Sigmoid colon (tissue), 7 donors: ENCODE measurements at regions of chr4 and their contacts with region 1.

Region 1: GRCh38 chr4:76515975-76516843 is 81.2 kb downstream of the SHROOM3 start:
- DNase-seq: no peak
- H3K4me3 ChIP-seq: no peak overlapping the region
- H3K27ac ChIP-seq: no peak overlapping the region
- H3K4me1 ChIP-seq: peaks cover 0 to 3% (median 0%) of the 10 kb centered on the region in 4 donors
- H3K27me3 ChIP-seq: no peaks in the 10 kb centered on the region
- CTCF ChIP-seq: no peak
- EP300 ChIP-seq: no peak
- POLR2A ChIP-seq: no peak

Region 2: DNA sequence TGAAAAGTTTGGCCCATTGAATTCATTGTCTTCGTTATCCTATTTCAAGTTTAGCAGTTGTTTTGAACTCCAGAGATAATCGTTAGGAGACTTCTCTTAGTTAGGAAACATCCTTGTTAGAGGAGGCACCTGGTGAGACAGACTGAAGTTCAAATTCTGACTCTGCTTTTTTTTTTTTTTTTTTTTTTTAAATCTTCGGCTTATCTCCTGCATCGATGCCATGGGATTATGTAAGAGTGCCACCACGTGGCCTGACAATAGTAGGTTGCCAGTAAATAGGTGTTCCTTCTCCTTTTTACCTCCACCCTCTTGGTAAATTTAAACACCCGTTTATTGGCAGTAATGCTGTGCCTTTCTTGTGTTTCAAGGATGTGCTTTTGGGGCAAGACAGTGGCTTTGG is 232.4 kb after region 1 on chr4:
- intact Hi-C with region 1: loop called (anchors 2 kb)
- DNase-seq: no peak
- H3K4me3 ChIP-seq: no peak overlapping the region
- H3K27ac ChIP-seq: no peak overlapping the region
- H3K4me1 ChIP-seq: peaks cover 0 to 41% (median 25%) of the 10 kb centered on the region in 4 donors
- H3K27me3 ChIP-seq: no peaks in the 10 kb centered on the region
- CTCF ChIP-seq: peak in 1 of 4 experiments; percentile 13
- EP300 ChIP-seq: no peak
- POLR2A ChIP-seq: no peak

Region 3: DNA sequence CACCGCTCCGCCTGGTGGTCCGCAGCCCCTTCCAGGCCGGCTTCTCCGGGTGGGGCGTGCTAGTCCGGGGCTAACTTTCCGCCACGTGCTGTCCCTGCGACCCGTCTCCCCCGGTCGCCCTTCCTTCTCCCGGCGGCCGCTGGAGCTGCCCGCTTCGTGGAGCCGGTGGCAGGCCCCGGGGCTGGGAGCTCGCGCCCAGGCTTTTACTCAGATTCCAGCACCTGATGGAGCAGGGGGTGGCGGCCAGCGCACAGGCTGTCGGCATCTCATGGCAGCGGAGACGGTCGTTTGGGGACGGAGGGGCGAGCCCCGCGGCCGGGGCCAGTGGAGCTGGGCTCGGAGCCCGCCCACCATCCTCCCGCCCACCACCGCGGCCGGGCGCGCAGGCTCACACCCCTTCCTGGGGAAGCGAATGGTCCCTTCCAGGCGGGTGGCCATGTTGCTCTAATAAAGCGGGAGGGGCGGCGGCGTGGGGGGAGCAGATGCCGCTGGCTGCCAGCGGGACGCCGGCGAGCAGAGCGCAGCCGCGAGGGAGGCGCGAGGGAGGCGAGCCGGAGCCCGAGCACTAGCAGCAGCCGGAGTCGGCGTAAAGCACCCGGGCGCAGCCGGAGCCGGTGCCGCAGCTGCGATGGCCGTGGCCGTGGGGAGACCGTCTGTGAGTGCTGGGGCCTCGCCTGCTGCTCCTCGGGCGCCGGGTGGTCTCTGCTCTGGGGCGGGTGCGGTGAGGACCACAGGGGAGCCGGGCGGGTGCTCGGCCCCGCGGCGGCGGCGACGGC is 433.3 kb after region 1 on chr4 and contains the start of gene SEPTIN11:
- intact Hi-C with region 1: loop called (anchors 10 kb)
- DNase-seq: peak; percentile 97
- H3K4me3 ChIP-seq: peak within 1 kb of the TSS; percentile 70 to 87 (median 78)
- H3K27ac ChIP-seq: peak within 1 kb of the TSS; percentile 87 to 95 (median 92)
- H3K4me1 ChIP-seq: peaks cover 2 to 27% (median 16%) of the 10 kb centered on the region in 4 donors
- H3K27me3 ChIP-seq: no peaks in the 10 kb centered on the region
- CTCF ChIP-seq: no peak
- EP300 ChIP-seq: no peak
- POLR2A ChIP-seq: peak; percentile 52 to 64
- total RNA-seq, gene SEPTIN11: 43.0 to 143 (median 107) TPM

Region 4: DNA sequence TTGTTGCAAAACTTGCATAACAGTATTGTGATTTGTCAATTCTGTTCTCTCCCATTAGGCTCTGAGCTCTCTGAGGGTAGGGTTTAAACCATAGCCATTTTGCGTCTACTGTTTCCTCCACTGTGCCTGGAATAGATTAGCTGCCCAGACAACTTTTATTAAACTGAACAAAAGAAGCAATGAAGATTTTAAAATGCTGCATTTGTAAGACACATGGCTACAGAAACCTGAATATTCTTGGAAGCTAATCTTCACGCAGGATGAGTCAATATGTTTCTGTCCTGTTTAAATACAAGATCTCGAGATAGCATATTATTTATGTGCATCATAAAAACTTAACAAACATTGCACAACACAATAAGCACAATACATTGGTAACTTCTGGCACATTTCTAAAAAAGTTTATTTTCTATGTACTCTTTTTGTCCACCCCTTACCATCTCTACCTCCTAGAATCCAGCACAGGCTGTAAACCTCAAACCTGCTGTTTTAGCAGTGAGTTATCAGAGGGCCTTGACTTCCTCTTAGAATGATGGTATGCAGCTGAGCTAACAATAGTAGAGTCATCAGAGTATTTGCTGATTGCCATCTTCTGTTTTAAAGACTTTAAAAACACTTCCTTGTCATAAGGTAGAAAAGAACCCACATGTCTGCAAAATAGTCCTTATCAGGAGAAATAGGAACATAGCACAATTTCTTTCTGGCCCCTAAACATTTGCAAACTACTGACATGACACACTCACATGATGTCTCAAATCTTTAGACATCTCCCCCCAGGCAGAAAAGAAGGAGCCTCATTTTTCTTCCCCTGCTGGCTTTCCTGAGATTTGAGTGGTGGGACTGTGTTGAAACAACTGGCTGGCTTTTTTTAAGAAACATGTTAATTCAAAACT is 630.2 kb after region 1 on chr4:
- intact Hi-C with region 1: loop called (anchors 5 kb)
- DNase-seq: no peak
- H3K4me3 ChIP-seq: no peak overlapping the region
- H3K27ac ChIP-seq: no peak overlapping the region
- H3K4me1 ChIP-seq: no peaks in the 10 kb centered on the region
- H3K27me3 ChIP-seq: no peaks in the 10 kb centered on the region
- CTCF ChIP-seq: no peak
- EP300 ChIP-seq: no peak
- POLR2A ChIP-seq: no peak